Dorsolateral prefrontal cortex (tissue), 120 donors: ENCODE measurements at regions of chr15 and their contacts with region 1.

Region 1: GRCh38 chr15:71575474-71576045 is 234.8 kb upstream of the NR2E3 start:
- DNase-seq: no peak
- H3K4me3 ChIP-seq: no peak overlapping the region
- H3K27ac ChIP-seq: no peak overlapping the region
- H3K27me3 ChIP-seq: peaks cover 0 to 11% (median 0%) of the 10 kb centered on the region in 45 donors
- CTCF ChIP-seq: peak in 42 of 56 donors; percentile 14 to 53 (median 30)

Region 2: GRCh38 chr15:71629781-71630474 is 54.4 kb after region 1 on chr15:
- intact Hi-C with region 1: no loop called
- DNase-seq: no peak
- H3K4me3 ChIP-seq: no peak overlapping the region
- H3K27ac ChIP-seq: peak overlapping the region in 4 of 59 donors; percentile 9 to 47 (median 30)
- H3K27me3 ChIP-seq: no peaks in the 10 kb centered on the region
- CTCF ChIP-seq: no peak

Region 3: GRCh38 chr15:71730277-71731144 is 155.0 kb after region 1 on chr15:
- intact Hi-C with region 1: loop called in 1 of 2 experiments (anchors 10 kb)
- DNase-seq: peak in 2 of 10 donors; percentile 49 to 58
- H3K4me3 ChIP-seq: no peak overlapping the region
- H3K27ac ChIP-seq: no peak overlapping the region
- H3K27me3 ChIP-seq: peaks cover 0 to 7% (median 0%) of the 10 kb centered on the region in 45 donors
- CTCF ChIP-seq: peak; percentile 52 to 87 (median 75)